ENCODE measurements at regions of chr3 and their contacts with region 1.

Region 1: GRCh38 chr3:111594205-111594604 is 941 bp downstream of the ZBED2 start:
- DNase-seq: peak; percentile 67
- H3K4me3 Mint-ChIP-seq: peak overlapping the region; percentile 96
- H3K27ac Mint-ChIP-seq: peak overlapping the region; percentile 96
- H3K4me1 Mint-ChIP-seq: peaks cover 57% of the 10 kb centered on the region
- H3K27me3 Mint-ChIP-seq: no peaks in the 10 kb centered on the region

Region 2: DNA sequence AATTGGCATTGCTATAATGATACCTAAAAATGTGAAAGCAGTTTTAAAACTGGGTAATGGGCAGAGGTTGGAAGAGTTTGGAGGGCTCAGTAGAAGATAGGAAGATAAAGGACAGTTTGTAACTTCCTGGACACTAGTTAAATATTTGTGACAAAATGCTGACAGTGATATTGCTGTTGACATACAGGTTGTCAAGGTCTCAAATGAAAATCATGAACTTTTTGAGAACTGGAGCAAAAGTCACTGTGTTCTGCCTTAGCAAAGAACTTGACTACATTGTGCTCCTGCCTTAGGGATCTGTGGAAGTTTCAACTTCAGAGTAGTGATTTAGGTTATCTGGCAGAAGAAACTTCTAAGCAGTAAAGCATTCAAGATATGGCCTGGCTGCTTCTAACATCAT is 165.9 kb before region 1 on chr3:
- intact Hi-C with region 1: no loop called
- DNase-seq: no peak
- H3K4me3 Mint-ChIP-seq: no peak overlapping the region
- H3K27ac Mint-ChIP-seq: no peak overlapping the region
- H3K4me1 Mint-ChIP-seq: no peaks in the 10 kb centered on the region
- H3K27me3 Mint-ChIP-seq: peaks cover 1% of the 10 kb centered on the region

Region 3: DNA sequence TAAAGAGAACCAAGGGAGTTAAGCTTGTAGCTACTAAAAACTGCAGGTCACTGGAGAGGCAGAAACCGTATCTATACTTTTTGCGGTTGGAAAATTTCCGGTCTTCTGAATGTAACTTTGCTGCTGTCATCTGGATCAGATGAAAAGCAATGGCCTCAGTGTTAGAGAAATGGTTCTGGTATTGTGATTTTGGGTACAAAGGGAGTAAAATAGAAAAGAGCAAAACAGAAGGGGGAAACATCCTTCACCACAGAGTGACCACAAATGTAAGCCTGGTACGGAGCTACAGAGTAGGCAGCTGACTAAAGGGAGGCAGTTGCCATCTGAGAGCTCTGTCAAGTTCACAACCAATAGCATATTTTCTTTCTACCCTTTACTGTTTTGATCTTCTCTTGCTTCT is 46.6 kb before region 1 on chr3:
- intact Hi-C with region 1: loop called (anchors 1 kb)
- DNase-seq: peak; percentile 87
- H3K4me3 Mint-ChIP-seq: no peak overlapping the region
- H3K27ac Mint-ChIP-seq: no peak overlapping the region
- H3K4me1 Mint-ChIP-seq: peaks cover 46% of the 10 kb centered on the region
- H3K27me3 Mint-ChIP-seq: no peaks in the 10 kb centered on the region